Activated CD4-positive, alpha-beta T cell treated with anti-CD3 and anti-CD28 coated beads, Interleukin-2, amount 10 ng/mL, durations not matched to agents 24 days and 14 days (primary cell): ENCODE measurements at regions of chr14 and their contacts with region 1.

Region 1: DNA sequence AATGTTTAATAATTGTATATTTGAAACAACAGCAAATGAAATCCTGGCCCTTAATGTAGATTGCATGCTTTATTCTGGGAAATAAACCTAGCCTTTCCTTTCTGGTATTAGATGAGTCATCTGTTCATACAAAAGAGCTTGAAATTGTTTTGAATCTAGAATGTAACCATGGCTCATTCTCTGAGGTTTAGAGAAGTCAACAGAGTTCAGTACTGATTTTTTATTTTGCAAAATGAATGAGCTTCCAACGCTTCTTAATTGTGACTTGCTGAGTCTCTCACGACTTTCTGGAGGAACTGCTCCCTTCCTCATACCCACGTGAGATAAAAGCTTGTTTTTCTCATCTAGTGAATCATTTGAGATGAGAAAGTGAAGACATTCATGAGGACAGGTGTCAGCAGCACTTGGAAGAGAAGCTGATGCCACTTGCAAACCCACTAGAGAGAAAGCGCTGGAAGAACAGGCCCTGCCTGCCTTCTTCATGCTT is 509.6 kb downstream of the VRK1 start:
- DNase-seq: peak; percentile 65
- H3K4me3 Mint-ChIP-seq: peak overlapping the region; percentile 20
- H3K27ac Mint-ChIP-seq: peak overlapping the region; percentile 86
- H3K4me1 Mint-ChIP-seq: peaks cover 28% of the 10 kb centered on the region
- H3K27me3 Mint-ChIP-seq: no peaks in the 10 kb centered on the region

Region 2: DNA sequence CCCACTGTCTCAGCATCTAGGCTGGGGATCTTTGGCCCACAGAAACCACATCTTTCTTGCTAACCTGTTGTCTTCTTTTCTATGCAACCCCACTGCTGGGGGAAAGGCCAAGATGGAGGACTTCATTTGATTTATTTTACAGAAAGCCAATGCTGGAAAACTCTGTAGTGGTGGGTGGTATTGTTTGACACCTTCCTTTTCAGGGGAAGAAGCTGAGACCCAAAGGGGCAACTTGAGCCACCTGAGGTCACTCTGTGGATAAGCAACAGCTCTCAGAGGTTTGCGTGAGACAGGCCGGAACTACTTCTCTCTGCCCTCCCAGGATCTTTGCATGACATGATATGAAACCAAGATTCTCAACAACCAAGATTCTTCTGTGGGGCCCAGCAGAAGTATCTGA is 135.6 kb after region 1 on chr14:
- intact Hi-C with region 1: loop called (anchors 5 kb)
- DNase-seq: peak; percentile 78
- H3K4me3 Mint-ChIP-seq: peak overlapping the region; percentile 40
- H3K27ac Mint-ChIP-seq: peak overlapping the region; percentile 92
- H3K4me1 Mint-ChIP-seq: peaks cover 26% of the 10 kb centered on the region
- H3K27me3 Mint-ChIP-seq: no peaks in the 10 kb centered on the region